Activated naive CD4-positive, alpha-beta T cell treated with anti-CD3 and anti-CD28 coated beads, Interleukin-2, amount 10 ng/mL, durations not matched to agents 7 days and 5 days (primary cell): ENCODE measurements at regions of chrX and their contacts with region 1.

Region 1: DNA sequence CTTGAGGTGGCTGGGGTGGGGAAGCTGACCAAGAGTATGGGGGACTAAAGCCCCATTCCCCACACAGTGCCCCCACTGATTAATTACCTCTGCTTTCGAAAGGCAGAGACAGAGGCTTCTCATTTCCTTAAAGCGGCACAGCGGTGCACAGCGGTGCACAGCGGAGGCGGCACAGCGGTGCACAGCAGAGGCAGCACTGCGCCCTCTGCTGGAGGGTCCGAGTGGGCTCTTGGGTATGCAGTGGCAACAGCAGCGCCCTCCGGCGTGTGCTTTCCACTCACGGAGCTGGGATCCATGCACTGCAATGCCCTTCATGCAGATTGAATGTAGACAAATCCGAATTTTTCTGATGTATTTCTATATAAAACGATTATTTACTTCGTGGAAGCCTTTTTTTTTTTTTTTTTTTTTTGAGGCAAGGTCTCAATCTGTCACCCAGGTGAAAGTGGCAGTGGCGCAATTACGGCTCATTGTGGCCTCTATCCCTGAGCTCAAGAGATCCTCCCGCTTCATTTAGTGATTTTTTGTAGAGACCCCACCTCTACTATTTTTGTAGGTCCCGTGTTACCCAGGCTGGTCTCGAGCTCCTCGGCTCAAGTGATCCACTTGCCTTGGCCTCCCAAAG is 19.7 kb upstream of the PRPS2 start:
- DNase-seq: peak; percentile 80
- H3K4me3 Mint-ChIP-seq: no peak overlapping the region
- H3K27ac Mint-ChIP-seq: no peak overlapping the region
- H3K4me1 Mint-ChIP-seq: peaks cover 4% of the 10 kb centered on the region
- H3K27me3 Mint-ChIP-seq: peaks cover 9% of the 10 kb centered on the region

Region 2: GRCh38 chrX:12701628-12702027 is 69.9 kb before region 1 on chrX:
- CTCF ChIA-PET with region 1: interaction called, 11 read pairs
- DNase-seq: peak; percentile 49
- H3K4me3 Mint-ChIP-seq: no peak overlapping the region
- H3K27ac Mint-ChIP-seq: no peak overlapping the region
- H3K4me1 Mint-ChIP-seq: no peaks in the 10 kb centered on the region
- H3K27me3 Mint-ChIP-seq: peaks cover 4% of the 10 kb centered on the region

Region 3: DNA sequence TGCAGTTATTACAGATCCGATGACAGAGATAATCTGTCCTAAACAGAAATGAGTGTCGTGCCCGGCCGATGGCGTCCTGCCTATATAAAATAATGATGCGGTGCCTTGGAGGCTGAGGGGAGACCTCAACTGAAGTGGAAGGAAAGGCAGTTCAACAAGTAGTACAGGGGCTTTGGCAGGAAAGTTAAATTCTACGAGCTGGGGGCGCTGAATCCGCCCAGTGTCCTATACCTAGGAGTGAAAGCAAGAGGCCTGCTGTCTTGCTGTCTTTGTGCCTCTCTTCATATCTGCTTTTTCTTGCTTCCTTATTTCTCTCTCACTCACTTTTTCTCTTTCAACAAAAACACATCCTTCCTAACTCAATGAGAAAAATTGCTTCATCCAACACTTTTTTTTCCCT is 62.5 kb before region 1 on chrX:
- CTCF ChIA-PET with region 1: interaction called, 20 read pairs
- DNase-seq: peak; percentile 45
- H3K4me3 Mint-ChIP-seq: no peak overlapping the region
- H3K27ac Mint-ChIP-seq: no peak overlapping the region
- H3K4me1 Mint-ChIP-seq: no peaks in the 10 kb centered on the region
- H3K27me3 Mint-ChIP-seq: no peaks in the 10 kb centered on the region

Region 4: DNA sequence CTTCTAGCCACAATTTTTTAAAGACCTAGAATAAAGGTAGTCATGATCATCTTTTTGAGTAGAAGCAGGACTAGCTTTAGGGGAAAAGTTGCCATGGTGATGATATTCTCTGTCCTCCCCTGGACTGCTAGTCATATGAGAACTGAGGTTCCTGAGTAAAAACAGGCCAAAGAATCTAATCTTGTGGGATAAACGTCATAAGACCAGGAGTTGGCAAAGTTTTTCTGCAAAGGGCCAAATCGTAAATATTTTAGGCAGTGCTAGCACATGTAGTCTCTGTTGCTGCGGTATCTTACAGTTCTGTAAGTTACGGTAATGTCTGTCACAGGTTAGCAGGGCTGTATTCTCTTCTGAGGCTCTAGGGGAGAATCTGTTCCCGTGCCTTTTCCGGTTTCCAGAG is 23.1 kb after region 1 on chrX:
- CTCF ChIA-PET with region 1: interaction called, 12 read pairs
- DNase-seq: no peak
- H3K4me3 Mint-ChIP-seq: no peak overlapping the region
- H3K27ac Mint-ChIP-seq: no peak overlapping the region
- H3K4me1 Mint-ChIP-seq: peaks cover 36% of the 10 kb centered on the region
- H3K27me3 Mint-ChIP-seq: peaks cover 4% of the 10 kb centered on the region